ENCODE measurements at regions of chr5 and their contacts with region 1.

Region 1: GRCh38 chr5:67003935-67004729 is 192.5 kb downstream of the CD180 start:
- DNase-seq: peak; percentile 91
- ATAC-seq: peak; percentile 91

Region 2: GRCh38 chr5:66680739-66681138 is 323.4 kb before region 1 on chr5:
- intact Hi-C with region 1: no loop called
- DNase-seq: no peak
- ATAC-seq: no peak

Region 3: GRCh38 chr5:66891183-66891925 is 112.8 kb before region 1 on chr5:
- intact Hi-C with region 1: no loop called
- DNase-seq: no peak
- ATAC-seq: peak; percentile 81

Region 4: DNA sequence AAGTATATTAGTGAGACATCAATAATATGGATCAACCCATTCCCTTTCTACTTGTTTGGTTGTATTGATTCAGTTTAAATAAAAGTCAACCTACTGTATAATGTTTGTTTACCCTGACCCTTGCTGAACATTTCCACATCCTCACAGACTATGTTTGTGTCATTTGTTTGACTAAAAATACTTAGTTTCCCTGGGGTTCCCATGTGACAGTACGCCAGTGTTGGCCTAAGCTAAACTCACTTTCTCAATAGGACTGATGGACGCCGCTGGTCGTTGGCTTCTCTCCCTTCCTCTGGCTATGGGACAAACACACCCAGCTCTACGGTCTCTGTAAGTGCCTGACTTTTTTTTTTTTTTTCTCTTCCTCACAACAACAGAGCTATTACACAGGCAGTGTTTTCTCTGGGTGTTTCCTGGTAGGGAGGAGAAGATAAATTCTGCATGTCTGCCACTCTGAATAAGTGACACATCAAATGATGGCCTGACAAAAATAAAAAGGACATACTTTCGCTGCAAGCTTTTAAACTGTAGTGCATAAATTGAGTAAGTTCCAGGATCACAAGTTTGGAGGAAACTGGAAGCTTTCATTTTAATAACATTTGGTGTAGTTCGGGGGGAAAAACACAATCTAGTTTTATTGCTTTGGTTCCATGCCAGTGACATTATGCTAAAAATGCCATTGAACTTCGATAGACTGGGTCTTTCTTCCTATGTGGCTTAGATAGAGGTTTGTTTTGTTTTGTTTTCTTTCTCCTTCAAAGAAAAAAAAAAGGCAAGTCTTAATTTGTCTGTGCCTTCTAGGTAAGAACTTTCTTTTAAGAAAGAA is 91.4 kb after region 1 on chr5:
- intact Hi-C with region 1: loop called (anchors 10 kb)
- DNase-seq: peak; percentile 87
- ATAC-seq: peak; percentile 96

Region 5: DNA sequence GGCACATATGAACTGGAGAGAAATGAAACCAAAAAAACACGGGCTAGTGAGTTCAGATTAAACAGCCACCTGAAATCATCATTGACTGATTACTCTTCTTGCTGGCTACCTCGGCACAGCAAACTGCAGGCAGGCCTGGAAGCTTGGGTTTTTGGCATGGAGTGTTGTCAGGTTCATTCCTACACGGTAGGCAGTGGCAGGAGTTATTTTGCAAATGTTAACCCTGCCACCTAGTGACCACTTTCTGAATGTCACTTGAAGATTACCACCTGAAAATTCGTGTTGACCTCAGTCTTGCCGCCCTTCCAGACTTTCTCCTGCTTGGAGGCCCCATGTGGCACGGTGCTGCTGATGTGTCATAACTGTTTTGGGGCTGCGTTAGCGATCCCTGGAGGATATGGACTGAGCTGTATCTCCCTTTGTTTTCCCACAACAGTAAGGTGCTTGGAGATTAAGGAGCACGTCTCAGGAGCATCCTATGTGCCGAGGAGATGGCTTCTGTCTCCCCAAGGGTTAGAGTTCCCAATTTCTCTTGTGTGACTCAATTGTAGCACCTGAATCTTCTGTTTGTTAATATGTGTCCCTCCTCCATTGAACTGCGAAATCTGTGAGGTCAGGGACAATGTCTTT is 205.1 kb after region 1 on chr5:
- intact Hi-C with region 1: loop called (anchors 10 kb)
- DNase-seq: no peak
- ATAC-seq: peak; percentile 83

Measured in Right ventricle myocardium superior (tissue), 1 donor.